Caco-2 (cell line): ENCODE measurements at regions of chr5 and their contacts with region 1.

Region 1: DNA sequence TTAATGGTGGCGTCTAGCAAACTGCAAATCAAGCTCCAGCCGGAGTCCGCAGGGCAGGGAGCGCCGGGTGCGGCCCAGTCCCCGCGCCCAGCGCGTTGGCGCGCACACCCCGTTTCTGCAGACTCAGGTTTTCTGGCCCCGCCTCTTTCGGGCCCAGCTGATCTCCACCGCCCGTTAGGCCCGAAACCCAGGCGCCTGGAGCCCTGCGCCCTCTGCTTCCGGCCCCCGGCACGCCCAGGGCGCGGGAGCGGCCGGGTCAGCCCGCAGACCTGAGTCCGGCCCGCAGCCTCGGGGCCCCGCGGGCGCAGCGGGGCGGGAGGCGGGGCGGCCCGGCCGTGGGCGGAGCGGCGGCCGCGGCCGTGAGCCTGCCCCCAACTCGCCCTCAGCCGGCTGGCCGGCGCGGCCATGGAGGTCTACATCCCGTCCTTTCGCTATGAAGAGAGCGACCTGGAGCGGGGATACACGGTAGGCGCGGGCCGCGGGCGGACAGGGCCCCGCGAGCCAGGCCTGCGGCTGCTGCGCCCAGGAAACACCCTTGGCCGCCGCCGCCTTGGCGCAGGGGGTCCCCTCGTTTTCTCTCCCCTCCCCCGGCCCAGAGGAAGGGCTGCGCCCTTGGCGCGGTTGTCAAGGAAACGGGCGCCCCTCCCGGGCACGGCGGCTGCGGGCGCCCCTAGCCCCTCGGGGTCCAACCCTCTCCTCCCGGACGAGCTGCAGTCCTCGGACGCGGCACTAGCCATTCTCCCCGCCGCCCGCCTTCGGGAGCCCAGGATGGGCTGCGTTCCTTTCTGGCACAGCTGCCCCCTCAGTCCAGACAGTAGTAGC is at the start of gene SNX24:
- DNase-seq: peak; percentile 86 to 90
- H3K4me3 ChIP-seq: peak within 1 kb of the TSS; percentile 93
- H3K4me3 Mint-ChIP-seq: peak within 1 kb of the TSS; percentile 78
- H3K27ac Mint-ChIP-seq: peak within 1 kb of the TSS; percentile 87
- H3K4me1 ChIP-seq: peaks cover 39% of the 10 kb centered on the region
- H3K4me1 Mint-ChIP-seq: peaks cover 36% of the 10 kb centered on the region
- H3K27me3 ChIP-seq: no peaks in the 10 kb centered on the region
- H3K27me3 Mint-ChIP-seq: no peaks in the 10 kb centered on the region
- CTCF ChIP-seq: no peak
- total RNA-seq, gene SNX24: 36.7 and 38.4 TPM in 2 replicates

Region 2: DNA sequence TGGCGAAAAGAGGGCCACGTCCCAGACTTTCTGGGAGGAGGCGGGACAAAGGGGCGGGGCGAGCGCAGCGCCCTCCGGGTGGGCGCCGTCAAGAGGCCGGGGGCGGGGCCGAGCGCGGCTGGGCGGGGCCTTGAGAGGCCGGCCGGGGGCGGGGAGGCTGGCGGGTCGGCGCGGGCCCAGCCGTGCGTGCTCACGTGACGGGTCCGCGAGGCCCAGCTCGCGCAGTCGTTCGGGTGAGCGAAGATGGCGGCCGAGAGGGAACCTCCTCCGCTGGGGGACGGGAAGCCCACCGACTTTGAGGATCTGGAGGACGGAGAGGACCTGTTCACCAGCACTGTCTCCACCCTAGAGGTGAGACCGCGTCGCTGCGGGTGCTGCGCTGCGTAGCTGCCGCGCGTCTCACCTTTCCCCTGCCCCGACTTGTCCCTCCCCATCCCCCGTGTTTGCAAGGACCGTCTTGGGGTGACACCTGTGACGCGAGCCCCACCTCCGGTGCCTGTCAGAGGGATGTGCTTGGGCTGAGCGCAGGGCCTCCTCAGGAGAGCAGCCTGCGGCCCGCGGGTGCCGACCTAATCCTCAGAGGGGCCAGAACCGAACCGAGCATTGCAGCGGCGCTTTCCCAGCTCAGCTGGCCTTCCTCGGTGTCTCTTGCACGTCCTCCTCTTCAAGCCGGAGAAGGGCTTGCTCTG is 70.4 kb before region 1 on chr5 and contains the start of gene SNX2:
- CTCF ChIA-PET with region 1: interaction called, 4 read pairs
- POLR2A ChIA-PET with region 1: interaction called, 5 read pairs
- intact Hi-C with region 1: loop called (anchors 2 kb)
- DNase-seq: peak; percentile 90 to 94
- H3K4me3 ChIP-seq: peak within 1 kb of the TSS; percentile 94
- H3K4me3 Mint-ChIP-seq: peak within 1 kb of the TSS; percentile 96
- H3K27ac Mint-ChIP-seq: peak within 1 kb of the TSS; percentile 2
- H3K4me1 ChIP-seq: peaks cover 52% of the 10 kb centered on the region
- H3K4me1 Mint-ChIP-seq: peaks cover 57% of the 10 kb centered on the region
- H3K27me3 ChIP-seq: no peaks in the 10 kb centered on the region
- H3K27me3 Mint-ChIP-seq: no peaks in the 10 kb centered on the region
- CTCF ChIP-seq: peak; percentile 22 to 28
- total RNA-seq, gene SNX2: 115 and 123 TPM in 2 replicates

Region 3: DNA sequence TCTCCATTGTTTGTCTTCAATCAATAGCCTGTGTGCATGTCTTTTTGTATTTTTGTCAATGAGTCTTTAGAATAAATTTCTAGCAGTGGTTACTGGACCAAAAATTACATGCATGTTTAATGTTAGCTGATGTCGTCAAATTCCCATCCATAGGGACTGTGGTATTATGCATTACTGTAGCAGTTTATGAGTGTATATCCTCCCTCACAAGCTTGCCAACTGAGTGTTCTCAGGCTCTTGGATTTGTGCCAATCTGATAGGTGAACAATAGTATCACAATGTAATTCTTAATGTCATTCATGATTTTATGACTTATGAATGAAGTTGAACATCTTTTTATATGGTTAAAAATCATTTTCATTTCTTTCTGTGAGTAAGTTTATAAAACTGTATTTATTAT is 13.0 kb after region 1 on chr5:
- CTCF ChIA-PET with region 1: no interaction called
- POLR2A ChIA-PET with region 1: no interaction called
- intact Hi-C with region 1: loop called (anchors 1 kb)
- DNase-seq: no peak
- H3K4me3 ChIP-seq: no peak overlapping the region
- H3K4me3 Mint-ChIP-seq: no peak overlapping the region
- H3K27ac Mint-ChIP-seq: no peak overlapping the region
- H3K4me1 ChIP-seq: peaks cover 25% of the 10 kb centered on the region
- H3K4me1 Mint-ChIP-seq: peaks cover 14% of the 10 kb centered on the region
- H3K27me3 ChIP-seq: no peaks in the 10 kb centered on the region
- H3K27me3 Mint-ChIP-seq: no peaks in the 10 kb centered on the region
- CTCF ChIP-seq: no peak

Region 4: DNA sequence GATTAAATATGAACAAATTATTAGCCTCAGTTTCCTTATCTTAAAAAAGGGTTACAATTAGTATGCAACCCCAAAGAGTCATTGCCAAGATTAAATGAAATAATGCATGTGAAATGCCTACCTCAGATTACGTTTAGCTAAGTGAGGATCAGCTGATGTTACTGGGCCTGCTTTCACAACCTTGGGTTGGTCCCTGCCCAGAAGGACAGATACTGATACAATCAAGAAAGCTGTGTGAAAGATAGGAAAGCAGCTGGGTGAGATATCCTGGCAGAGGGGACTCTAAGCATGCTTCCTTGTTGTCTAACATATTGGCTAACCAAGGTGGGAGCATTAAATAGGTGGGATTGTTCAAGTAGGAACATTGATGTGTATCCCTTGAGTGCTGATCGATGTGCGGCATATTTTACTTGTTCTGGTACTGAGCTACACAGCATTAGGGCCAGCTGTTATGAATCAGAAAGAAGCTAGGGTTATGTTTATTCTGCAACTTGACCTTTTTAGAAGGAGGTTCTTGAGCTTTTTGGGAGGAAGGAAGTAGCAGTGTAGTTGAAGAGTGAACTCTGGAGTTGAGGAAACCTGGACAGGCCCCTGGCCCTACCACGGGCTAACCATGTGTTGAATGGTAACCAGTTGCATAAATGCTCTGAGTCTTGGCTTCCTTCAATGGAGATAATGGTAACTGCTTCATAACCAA is 28.9 kb after region 1 on chr5:
- CTCF ChIA-PET with region 1: no interaction called
- POLR2A ChIA-PET with region 1: no interaction called
- intact Hi-C with region 1: no loop called
- DNase-seq: no peak
- H3K4me3 ChIP-seq: no peak overlapping the region
- H3K4me3 Mint-ChIP-seq: no peak overlapping the region
- H3K27ac Mint-ChIP-seq: no peak overlapping the region
- H3K4me1 ChIP-seq: no peaks in the 10 kb centered on the region
- H3K4me1 Mint-ChIP-seq: peaks cover 5% of the 10 kb centered on the region
- H3K27me3 ChIP-seq: no peaks in the 10 kb centered on the region
- H3K27me3 Mint-ChIP-seq: no peaks in the 10 kb centered on the region
- CTCF ChIP-seq: no peak

Region 5: GRCh38 chr5:122885891-122886290 is 40.5 kb after region 1 on chr5:
- CTCF ChIA-PET with region 1: no interaction called
- POLR2A ChIA-PET with region 1: no interaction called
- intact Hi-C with region 1: no loop called
- DNase-seq: no peak
- H3K4me3 ChIP-seq: no peak overlapping the region
- H3K4me3 Mint-ChIP-seq: no peak overlapping the region
- H3K27ac Mint-ChIP-seq: no peak overlapping the region
- H3K4me1 ChIP-seq: no peaks in the 10 kb centered on the region
- H3K4me1 Mint-ChIP-seq: no peaks in the 10 kb centered on the region
- H3K27me3 ChIP-seq: no peaks in the 10 kb centered on the region
- H3K27me3 Mint-ChIP-seq: no peaks in the 10 kb centered on the region
- CTCF ChIP-seq: no peak

Region 6: DNA sequence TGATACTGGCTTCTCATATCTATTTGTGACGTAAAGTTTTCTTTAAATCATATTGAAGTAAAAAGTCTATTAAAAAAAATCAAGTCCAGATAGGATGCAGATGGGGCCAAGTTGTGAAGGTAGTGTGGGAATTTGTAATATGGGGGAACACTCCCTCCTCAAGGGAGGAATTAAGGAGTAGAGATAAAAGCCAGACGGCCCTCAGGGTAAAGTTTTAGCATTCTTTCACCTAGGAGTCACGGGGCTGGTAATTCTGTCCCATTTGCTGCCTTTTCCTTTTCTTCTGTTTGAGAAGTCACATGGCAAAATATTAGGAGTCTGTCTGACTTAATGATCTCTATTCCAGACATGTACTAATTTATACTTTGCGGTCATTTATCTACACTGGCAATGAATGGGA is 61.8 kb after region 1 on chr5:
- CTCF ChIA-PET with region 1: no interaction called
- POLR2A ChIA-PET with region 1: no interaction called
- intact Hi-C with region 1: loop called (anchors 2 kb)
- DNase-seq: peak; percentile 50 to 58
- H3K4me3 ChIP-seq: no peak overlapping the region
- H3K4me3 Mint-ChIP-seq: peak overlapping the region; percentile 30
- H3K27ac Mint-ChIP-seq: peak overlapping the region; percentile 75
- H3K4me1 ChIP-seq: peaks cover 32% of the 10 kb centered on the region
- H3K4me1 Mint-ChIP-seq: peaks cover 33% of the 10 kb centered on the region
- H3K27me3 ChIP-seq: no peaks in the 10 kb centered on the region
- H3K27me3 Mint-ChIP-seq: no peaks in the 10 kb centered on the region
- CTCF ChIP-seq: no peak

Region 7: DNA sequence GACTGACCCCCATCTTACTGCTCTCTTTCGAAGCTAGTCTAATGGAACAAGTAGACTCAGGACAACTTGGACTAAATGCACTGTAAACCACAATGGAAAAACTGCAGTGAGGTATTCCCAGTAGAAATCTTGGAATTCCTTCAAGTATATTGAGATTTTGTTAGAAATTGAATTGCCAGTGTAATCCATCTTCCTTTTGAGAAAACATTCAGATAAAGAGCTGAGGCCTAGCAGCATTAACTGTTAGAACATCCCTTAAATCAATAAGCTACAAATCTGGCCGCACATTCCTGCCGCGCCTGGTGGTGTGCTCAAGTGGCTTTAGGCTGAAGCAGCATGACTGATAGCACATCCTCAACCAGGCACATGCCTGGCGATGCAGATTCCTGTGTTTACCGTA is 161.7 kb after region 1 on chr5:
- CTCF ChIA-PET with region 1: no interaction called
- POLR2A ChIA-PET with region 1: interaction called, 15 read pairs
- intact Hi-C with region 1: no loop called
- DNase-seq: no peak
- H3K4me3 ChIP-seq: no peak overlapping the region
- H3K4me3 Mint-ChIP-seq: no peak overlapping the region
- H3K27ac Mint-ChIP-seq: no peak overlapping the region
- H3K4me1 ChIP-seq: no peaks in the 10 kb centered on the region
- H3K4me1 Mint-ChIP-seq: no peaks in the 10 kb centered on the region
- H3K27me3 ChIP-seq: no peaks in the 10 kb centered on the region
- H3K27me3 Mint-ChIP-seq: no peaks in the 10 kb centered on the region
- CTCF ChIP-seq: no peak